ENCODE measurements at regions of chr2 and their contacts with region 1.

Region 1: DNA sequence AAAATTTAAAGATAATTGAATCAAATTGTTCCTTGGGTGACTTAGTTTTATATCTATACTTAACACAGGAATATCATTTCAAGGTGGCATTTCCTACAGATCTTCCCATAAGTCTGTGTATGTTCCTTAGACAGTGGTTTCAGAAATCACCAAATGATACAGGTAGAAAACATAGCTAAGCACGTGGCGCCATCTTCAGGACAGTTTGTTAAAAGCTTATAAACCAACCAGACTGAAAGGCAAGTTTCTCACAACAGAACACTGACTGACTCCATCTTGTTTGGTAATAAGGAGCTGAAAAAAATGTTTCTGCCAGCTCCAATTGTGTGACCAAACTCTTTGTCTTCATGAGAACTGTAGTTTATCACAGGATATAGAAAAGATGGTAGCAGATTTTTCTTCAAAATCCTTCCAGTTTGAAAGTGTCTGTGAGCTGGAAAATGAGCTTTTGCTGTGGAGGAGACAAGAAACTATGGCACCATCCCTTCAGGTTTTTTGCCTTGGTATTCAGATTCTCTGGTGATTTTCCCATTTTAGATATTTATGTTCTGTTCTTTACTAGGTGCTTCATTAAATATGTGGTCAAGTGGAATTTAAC is 34.8 kb upstream of the NEUROD1 start:
- DNase-seq: peak; percentile 74
- H3K4me3 ChIP-seq: no peak overlapping the region
- H3K27ac ChIP-seq: no peak overlapping the region
- H3K4me1 ChIP-seq: no peaks in the 10 kb centered on the region
- H3K27me3 ChIP-seq: no peaks in the 10 kb centered on the region
- CTCF ChIP-seq: peak; percentile 35 to 74 (median 68)
- POLR2A ChIP-seq: no peak

Region 2: DNA sequence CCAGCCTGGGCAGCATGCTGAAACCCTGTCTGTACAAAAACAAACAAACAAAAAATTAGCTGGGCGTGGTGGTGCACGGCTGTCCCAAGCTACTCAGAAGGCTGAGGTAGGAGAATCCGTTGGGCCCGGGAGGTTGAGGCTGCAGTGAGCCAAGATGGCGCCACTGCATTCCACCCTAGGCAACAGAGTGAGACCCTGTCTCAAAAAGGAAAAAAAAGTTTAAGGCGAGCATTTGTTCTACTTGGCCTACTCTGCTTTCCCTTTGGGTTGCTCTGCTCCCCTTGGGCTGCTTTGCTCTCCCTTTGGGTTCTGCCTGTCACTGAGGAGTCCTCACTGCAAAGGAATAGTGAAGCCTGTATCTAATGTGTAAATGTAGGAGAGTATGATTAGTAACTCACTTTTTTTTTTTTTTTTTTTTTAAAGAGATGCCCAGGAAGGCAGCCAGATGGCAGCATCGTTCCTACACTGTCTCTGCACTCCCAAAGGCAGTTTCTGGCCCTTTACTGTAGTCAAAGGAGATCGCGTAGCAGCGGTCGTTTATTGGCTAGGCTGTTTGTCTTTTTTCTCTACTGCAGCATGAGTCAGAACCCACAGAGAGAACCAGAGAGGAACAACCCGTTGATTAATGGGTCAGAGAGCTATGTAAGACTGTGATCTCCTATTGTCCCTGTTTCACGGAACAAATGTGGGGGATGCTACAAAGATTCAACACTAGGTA is 1589.7 kb before region 1 on chr2:
- intact Hi-C with region 1: loop called (anchors 10 kb)
- DNase-seq: peak; percentile 63
- H3K4me3 ChIP-seq: no peak overlapping the region
- H3K27ac ChIP-seq: no peak overlapping the region
- H3K4me1 ChIP-seq: peaks cover 2% of the 10 kb centered on the region
- H3K27me3 ChIP-seq: no peaks in the 10 kb centered on the region
- CTCF ChIP-seq: peak in 3 of 4 experiments; percentile 42 to 46 (median 46)
- POLR2A ChIP-seq: no peak

Region 3: DNA sequence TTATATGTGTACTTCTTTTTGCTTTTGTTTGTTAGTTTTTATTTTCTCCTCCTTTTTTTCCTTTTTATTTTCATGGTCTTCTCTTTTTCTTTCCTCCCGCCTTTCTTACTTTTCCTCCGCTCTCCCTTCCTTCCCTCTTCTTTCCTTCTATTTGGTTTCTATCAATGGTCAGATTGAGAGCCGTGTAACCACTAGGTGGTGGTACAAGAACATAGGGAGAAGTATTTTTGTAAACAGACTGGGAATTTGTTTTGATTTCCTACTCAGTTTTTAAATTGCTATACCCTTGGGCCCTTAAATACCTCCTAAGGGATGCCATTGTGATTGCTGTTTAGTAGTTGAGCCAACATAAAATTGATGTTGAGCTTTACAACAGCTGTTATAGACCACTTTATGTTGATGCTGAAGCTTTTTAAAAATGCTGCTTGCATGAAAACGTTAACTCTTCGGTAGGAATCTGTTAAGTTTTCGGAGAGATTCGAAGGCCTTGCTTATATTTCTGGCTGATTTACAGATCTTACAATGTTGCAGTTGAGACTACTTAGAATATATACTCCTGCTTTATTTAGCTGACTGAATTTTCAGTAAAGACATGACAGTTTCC is 610.5 kb before region 1 on chr2:
- intact Hi-C with region 1: loop called (anchors 10 kb)
- DNase-seq: peak; percentile 5
- H3K4me3 ChIP-seq: no peak overlapping the region
- H3K27ac ChIP-seq: no peak overlapping the region
- H3K4me1 ChIP-seq: no peaks in the 10 kb centered on the region
- H3K27me3 ChIP-seq: no peaks in the 10 kb centered on the region
- CTCF ChIP-seq: peak; percentile 24 to 61 (median 41)
- POLR2A ChIP-seq: no peak

Region 4: GRCh38 chr2:181573140-181573736 is 141.9 kb before region 1 on chr2:
- intact Hi-C with region 1: loop called (anchors 10 kb)
- DNase-seq: no peak
- H3K4me3 ChIP-seq: no peak overlapping the region
- H3K27ac ChIP-seq: no peak overlapping the region
- H3K4me1 ChIP-seq: no peaks in the 10 kb centered on the region
- H3K27me3 ChIP-seq: no peaks in the 10 kb centered on the region
- CTCF ChIP-seq: no peak
- POLR2A ChIP-seq: no peak

Region 5: DNA sequence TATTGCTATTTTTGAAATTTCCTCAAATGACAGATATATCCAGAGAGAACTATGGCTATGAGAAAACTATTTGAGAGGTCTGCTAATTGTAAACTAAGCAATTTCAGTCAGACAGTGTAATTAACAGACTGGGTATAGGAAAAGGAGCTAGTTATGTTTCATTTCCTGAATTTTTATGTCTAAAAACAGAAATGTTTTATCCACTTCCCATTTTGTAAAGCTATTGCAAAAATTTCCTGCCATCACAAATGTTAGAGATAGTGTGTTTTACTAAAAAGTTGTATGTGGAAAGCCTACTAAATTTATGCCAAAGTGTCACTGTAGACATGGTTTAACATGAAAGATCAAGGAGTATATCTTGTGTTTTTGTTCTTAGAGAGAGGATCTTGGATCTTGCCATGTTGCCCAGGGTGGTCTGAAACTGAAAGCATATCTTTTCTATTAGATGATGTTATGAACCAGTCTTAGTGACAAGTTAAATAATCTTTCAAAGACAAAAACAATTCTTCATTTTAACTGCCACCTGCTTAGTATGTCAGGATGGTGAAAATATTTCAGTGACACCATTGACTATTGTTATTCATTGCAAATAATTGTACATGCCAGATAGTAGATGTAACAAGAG is 135.9 kb after region 1 on chr2:
- intact Hi-C with region 1: no loop called
- DNase-seq: no peak
- H3K4me3 ChIP-seq: no peak overlapping the region
- H3K27ac ChIP-seq: no peak overlapping the region
- H3K4me1 ChIP-seq: no peaks in the 10 kb centered on the region
- H3K27me3 ChIP-seq: no peaks in the 10 kb centered on the region
- CTCF ChIP-seq: no peak
- POLR2A ChIP-seq: no peak